Activated CD4-positive, alpha-beta memory T cell treated with anti-CD3 and anti-CD28 coated beads for 36 hours (primary cell): ENCODE measurements at regions of chr11 and their contacts with region 1.

Region 1: DNA sequence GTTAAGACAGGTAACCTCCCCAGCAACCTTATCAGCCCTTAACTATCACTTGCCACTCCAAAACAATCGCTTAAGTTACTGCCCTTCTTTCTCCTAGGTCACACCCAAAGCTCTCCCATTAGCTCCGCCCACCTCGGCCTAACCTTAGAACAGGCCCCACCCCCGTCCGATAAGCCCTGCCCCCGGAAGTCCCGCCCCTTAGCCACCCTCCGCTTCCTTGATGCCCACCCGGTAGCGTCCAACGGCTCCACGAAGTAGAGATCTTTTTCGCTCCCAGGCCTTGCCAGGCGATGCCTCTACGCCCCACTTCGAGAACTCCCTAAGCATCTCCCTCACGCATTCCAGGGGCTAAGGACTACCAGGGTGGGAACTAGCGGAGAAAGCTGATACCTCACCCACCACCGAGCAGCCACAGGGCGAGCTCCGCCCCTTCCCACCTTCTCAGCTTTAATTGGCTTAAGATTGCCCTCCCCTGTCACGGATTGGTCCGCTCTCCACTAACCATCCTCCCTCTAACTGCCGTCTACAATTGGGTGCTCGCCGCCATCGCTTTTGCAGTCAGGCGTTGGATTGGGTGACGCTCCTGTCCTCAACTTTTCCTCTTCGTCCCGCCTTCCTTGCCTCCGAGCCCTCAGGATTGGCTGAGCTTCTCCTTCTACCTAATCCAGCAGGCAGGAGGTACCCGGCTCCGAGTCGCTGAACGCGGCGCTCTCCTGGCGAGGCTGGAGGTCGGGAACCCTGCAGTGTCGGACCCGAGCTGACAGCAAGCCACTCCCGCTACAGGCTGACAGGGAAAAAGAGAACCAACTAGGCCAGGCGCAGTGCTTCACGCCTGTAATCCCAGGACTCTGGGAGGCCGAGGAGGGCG is at the start of gene ZBTB3:
- DNase-seq: peak; percentile 98
- H3K4me3 Mint-ChIP-seq: peak within 1 kb of the TSS; percentile 99
- H3K27ac Mint-ChIP-seq: peak within 1 kb of the TSS; percentile 99
- H3K4me1 Mint-ChIP-seq: peaks cover 23% of the 10 kb centered on the region
- H3K27me3 Mint-ChIP-seq: no peaks in the 10 kb centered on the region
- total RNA-seq, gene ZBTB3: 8.4 to 9.7 TPM

Region 2: DNA sequence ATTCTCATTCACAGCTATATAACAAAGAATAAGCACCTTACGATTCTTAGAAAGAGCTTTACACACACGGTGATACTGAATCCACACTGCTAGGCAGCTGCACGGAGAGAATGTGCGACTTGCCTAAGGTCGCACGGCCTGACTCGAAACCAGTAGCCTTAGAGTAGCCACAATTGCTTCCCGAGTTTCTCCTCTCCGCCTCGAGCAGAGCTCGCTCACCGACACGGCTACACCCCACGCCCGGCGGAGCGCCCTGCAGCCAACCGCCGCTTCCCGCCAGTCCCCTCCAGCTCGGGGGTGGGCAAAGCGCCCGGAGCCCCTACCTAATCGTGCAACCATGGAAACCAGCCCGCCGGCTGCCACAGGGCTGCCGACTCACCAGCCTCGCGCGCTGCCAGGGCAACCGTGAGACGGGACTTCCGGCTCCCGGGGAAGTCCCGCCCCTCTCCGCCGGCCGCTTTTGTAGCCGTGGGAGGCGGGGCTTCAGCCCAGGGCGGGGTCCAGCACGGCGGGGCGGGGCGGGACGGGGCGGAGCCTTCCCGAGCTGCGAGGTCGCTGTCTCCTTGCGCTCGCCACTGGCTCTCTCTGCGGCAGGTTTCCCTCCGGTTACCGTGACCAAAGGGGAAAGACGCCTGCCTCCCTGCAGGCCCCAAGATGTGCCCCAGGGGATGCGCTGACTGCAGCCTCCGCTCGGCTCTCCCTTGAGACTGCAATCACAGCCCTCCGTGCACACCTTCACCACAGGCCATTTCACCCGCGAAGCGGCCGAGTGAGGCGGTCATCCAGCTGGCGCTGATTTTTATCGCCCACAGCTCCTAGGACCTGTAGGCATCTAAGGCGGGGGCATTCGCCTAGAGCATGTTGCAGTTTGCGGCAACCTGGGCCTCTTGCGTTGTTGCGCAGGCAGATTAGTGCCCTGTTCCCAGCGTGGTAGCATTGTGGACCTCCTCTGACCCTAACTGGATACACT is 47.8 kb before region 1 on chr11:
- CTCF ChIA-PET with region 1: no interaction called
- POLR2A ChIA-PET with region 1: interaction called, 11 read pairs
- intact Hi-C with region 1: loop called (anchors 5 kb)
- DNase-seq: peak; percentile 96
- H3K4me3 Mint-ChIP-seq: peak overlapping the region; percentile 85
- H3K27ac Mint-ChIP-seq: peak overlapping the region; percentile 70
- H3K4me1 Mint-ChIP-seq: peaks cover 50% of the 10 kb centered on the region
- H3K27me3 Mint-ChIP-seq: no peaks in the 10 kb centered on the region

Region 3: GRCh38 chr11:62771144-62772021 is 17.4 kb after region 1 on chr11 and contains the start of gene TAF6L:
- CTCF ChIA-PET with region 1: interaction called, 9 read pairs
- POLR2A ChIA-PET with region 1: interaction called, 32 read pairs
- intact Hi-C with region 1: loop called (anchors 2 kb)
- DNase-seq: peak; percentile 98
- H3K4me3 Mint-ChIP-seq: peak within 1 kb of the TSS; percentile 79
- H3K27ac Mint-ChIP-seq: peak within 1 kb of the TSS; percentile 94
- H3K4me1 Mint-ChIP-seq: peaks cover 24% of the 10 kb centered on the region
- H3K27me3 Mint-ChIP-seq: no peaks in the 10 kb centered on the region
- total RNA-seq, gene TAF6L: 11.9 to 12.0 TPM

Region 4: GRCh38 chr11:62823677-62824076 is 69.7 kb after region 1 on chr11:
- CTCF ChIA-PET with region 1: no interaction called
- POLR2A ChIA-PET with region 1: no interaction called
- intact Hi-C with region 1: no loop called
- DNase-seq: no peak
- H3K4me3 Mint-ChIP-seq: no peak overlapping the region
- H3K27ac Mint-ChIP-seq: no peak overlapping the region
- H3K4me1 Mint-ChIP-seq: no peaks in the 10 kb centered on the region
- H3K27me3 Mint-ChIP-seq: no peaks in the 10 kb centered on the region